ENCODE measurements at regions of chr5 and their contacts with region 1.

Region 1: GRCh38 chr5:178153573-178154343 is at the start of gene NHP2:
- DNase-seq: peak; percentile 93 to 100
- H3K4me3 ChIP-seq: peak within 1 kb of the TSS; percentile 93
- H3K27ac ChIP-seq: peak within 1 kb of the TSS; percentile 63
- H3K4me1 ChIP-seq: peaks cover 8% of the 10 kb centered on the region
- H3K27me3 ChIP-seq: no peaks in the 10 kb centered on the region
- CTCF ChIP-seq: no peak
- total RNA-seq, gene NHP2: 221 and 229 TPM in 2 replicates

Region 2: GRCh38 chr5:177546258-177546741 is 607.5 kb before region 1 on chr5:
- CTCF ChIA-PET with region 1: no interaction called
- POLR2A ChIA-PET with region 1: interaction called, 16 read pairs
- intact Hi-C with region 1: no loop called
- DNase-seq: peak; percentile 61 to 95
- H3K4me3 ChIP-seq: no peak overlapping the region
- H3K27ac ChIP-seq: peak overlapping the region; percentile 69
- H3K4me1 ChIP-seq: peaks cover 31% of the 10 kb centered on the region
- H3K27me3 ChIP-seq: no peaks in the 10 kb centered on the region
- CTCF ChIP-seq: no peak

Measured in PC-9 (cell line).